ENCODE measurements at regions of chr7 and their contacts with region 1.

Region 1: GRCh38 chr7:2632733-2633537 is 1.1 kb downstream of the TTYH3 start:
- DNase-seq: no peak
- ATAC-seq: peak; percentile 57
- H3K4me3 ChIP-seq: peak overlapping the region; percentile 96
- H3K27ac ChIP-seq: peak overlapping the region; percentile 71
- H3K4me1 ChIP-seq: peaks cover 20% of the 10 kb centered on the region
- H3K27me3 ChIP-seq: 0 out of 4 replicates have a peak, but pooled peaks cover 0 to 1% of the 10 kb centered on the region in 2 experiments
- CTCF ChIP-seq: no peak
- EP300 ChIP-seq: no peak
- POLR2A ChIP-seq: no peak; the same call in 1 of the 2 replicates
- RAD21 ChIP-seq: no peak

Region 2: DNA sequence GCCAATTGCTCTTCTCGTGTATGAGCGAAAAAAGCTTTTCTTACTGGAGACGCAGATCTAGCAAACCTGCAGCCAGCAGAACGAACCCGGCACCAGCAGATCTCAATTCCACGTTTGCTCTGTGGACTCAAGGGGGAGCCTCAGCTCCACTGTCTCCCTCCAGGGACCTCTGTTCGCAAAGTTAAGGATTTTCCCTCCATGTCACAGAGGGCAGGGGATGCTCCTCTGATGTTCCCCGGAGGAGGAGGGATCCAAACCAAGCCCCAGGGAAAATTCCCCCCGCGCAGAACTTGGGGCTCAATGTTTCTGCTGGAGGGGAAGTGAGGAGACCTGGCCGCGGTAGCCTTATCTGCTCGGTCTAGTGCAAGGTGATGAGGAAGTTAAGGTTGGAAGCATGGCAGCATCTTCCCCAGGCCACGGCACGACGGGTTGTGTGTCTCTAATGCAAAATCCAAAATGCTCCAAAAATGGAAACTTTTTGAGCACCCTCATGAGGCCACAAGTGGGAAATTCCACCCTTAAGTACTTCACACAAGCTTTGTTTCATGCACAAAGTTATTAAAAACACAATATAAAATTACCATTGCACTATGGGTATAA is 65.2 kb before region 1 on chr7:
- CTCF ChIA-PET with region 1: interaction called, 6 read pairs
- POLR2A ChIA-PET with region 1: interaction called, 6 read pairs
- RAD21 ChIA-PET with region 1: interaction called, 4 read pairs
- SMC1A ChIA-PET with region 1: interaction called, 3 read pairs
- in situ Hi-C with region 1: no loop called
- intact Hi-C with region 1: loop called (anchors 2 kb)
- DNase-seq: no peak
- ATAC-seq: peak; percentile 69
- H3K4me3 ChIP-seq: 0 out of 2 replicates have a peak overlapping the region, but pooled peaks have one; percentile 54
- H3K27ac ChIP-seq: no peak overlapping the region
- H3K4me1 ChIP-seq: peaks cover 23% of the 10 kb centered on the region
- H3K27me3 ChIP-seq: no peaks in the 10 kb centered on the region
- CTCF ChIP-seq: peak; percentile 43 to 59 (median 55)
- EP300 ChIP-seq: no peak
- POLR2A ChIP-seq: no peak
- RAD21 ChIP-seq: peak; percentile 56

Measured in GM12878 (cell line).